WTC11 (cell line): ENCODE measurements at regions of chr18 and their contacts with region 1.

Region 1: GRCh38 chr18:1585879-1586488 is 681.3 kb downstream of the ADCYAP1 start:
- DNase-seq: no peak
- ATAC-seq: peak; percentile 63
- H3K4me3 Mint-ChIP-seq: no peak overlapping the region
- H3K27ac Mint-ChIP-seq: no peak overlapping the region
- H3K4me1 Mint-ChIP-seq: no peaks in the 10 kb centered on the region
- H3K27me3 Mint-ChIP-seq: peaks cover 8% of the 10 kb centered on the region
- CTCF ChIP-seq: no peak

Region 2: DNA sequence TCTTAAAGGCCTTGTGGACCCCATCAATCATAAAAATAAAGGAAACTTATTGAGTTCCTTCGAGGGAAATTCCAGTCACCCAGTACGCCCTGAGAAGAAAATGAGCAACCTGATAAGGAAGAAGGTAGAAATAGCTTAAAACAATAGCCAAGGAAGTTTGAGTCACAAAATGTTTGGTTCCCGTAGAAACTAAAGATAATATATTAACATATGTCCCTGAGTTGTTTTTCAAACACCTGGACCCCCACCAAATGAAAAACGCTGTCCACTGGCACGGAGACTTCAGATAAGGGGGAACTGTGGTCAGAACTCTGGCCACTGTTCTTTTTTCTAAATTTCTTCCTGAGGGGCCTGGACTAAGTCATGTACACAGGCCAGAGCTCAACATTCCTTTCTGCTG is 12.3 kb before region 1 on chr18:
- CTCF ChIA-PET with region 1: interaction called, 17 read pairs
- POLR2A ChIA-PET with region 1: no interaction called
- DNase-seq: no peak
- ATAC-seq: no peak
- H3K4me3 Mint-ChIP-seq: no peak overlapping the region
- H3K27ac Mint-ChIP-seq: no peak overlapping the region
- H3K4me1 Mint-ChIP-seq: peaks cover 7% of the 10 kb centered on the region
- H3K27me3 Mint-ChIP-seq: no peaks in the 10 kb centered on the region
- CTCF ChIP-seq: no peak

Region 3: GRCh38 chr18:1663879-1664705 is 78.1 kb after region 1 on chr18:
- CTCF ChIA-PET with region 1: interaction called, 10 read pairs
- POLR2A ChIA-PET with region 1: no interaction called
- DNase-seq: peak; percentile 78
- ATAC-seq: peak; percentile 90
- H3K4me3 Mint-ChIP-seq: no peak overlapping the region
- H3K27ac Mint-ChIP-seq: no peak overlapping the region
- H3K4me1 Mint-ChIP-seq: no peaks in the 10 kb centered on the region
- H3K27me3 Mint-ChIP-seq: peaks cover 3% of the 10 kb centered on the region; the same call in 1 of the 2 replicates
- CTCF ChIP-seq: peak; percentile 74